ENCODE measurements at regions of chr2 and their contacts with region 1.

Region 1: DNA sequence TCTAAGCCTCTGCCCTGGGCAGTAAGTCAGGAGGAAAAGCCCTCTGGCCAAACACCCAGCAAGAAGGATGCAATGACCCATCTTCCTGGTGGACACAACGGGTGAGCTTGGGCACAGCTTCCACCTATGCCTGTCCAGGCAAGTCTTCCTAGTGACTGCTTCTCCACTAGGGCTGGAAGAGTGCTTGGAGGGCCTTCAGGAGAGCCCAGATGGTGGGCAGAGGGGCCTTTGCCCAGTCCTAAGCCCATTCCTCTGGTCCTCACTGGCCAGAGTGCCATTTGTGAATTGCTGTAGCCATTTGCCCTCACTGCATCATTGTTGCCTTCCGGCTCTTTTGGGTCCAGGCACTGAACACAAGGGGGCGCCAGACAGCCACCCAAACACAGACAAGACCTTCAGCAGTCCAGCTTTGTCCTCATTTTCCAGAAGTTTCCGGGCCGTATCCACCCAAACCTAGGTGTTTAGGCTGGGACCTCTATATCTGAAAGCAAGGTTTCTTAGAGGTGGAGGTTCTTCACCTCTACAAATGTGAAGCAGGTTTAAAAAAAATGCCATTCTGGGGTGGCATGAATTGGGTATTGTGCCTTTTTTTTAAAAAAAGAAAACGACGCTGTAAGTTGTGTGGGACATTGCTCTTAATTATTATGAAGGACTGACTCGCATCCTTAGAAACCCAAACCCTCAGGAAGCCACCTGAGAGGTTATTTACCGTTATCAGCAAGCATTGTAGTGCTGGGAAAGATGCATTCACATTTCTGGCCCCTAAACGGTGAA is 29.5 kb downstream of the PAX8 start:
- DNase-seq: peak; percentile 83
- H3K4me3 ChIP-seq: no peak overlapping the region
- H3K27ac ChIP-seq: no peak overlapping the region
- H3K4me1 ChIP-seq: peaks cover 0 to 8% (median 2%) of the 10 kb centered on the region in 4 donors
- H3K27me3 ChIP-seq: no peaks in the 10 kb centered on the region
- CTCF ChIP-seq: peak; percentile 53 to 91 (median 84)
- EP300 ChIP-seq: no peak
- POLR2A ChIP-seq: no peak

Region 2: GRCh38 chr2:113324684-113325160 is 75.5 kb after region 1 on chr2:
- intact Hi-C with region 1: loop called (anchors 10 kb)
- DNase-seq: no peak
- H3K4me3 ChIP-seq: peak overlapping the region; percentile 10 to 46 (median 40)
- H3K27ac ChIP-seq: peak overlapping the region in 3 of 4 donors; percentile 24 to 78 (median 28)
- H3K4me1 ChIP-seq: peaks cover 0 to 23% (median 15%) of the 10 kb centered on the region in 4 donors
- H3K27me3 ChIP-seq: no peaks in the 10 kb centered on the region
- CTCF ChIP-seq: no peak
- EP300 ChIP-seq: no peak
- POLR2A ChIP-seq: no peak

Region 3: DNA sequence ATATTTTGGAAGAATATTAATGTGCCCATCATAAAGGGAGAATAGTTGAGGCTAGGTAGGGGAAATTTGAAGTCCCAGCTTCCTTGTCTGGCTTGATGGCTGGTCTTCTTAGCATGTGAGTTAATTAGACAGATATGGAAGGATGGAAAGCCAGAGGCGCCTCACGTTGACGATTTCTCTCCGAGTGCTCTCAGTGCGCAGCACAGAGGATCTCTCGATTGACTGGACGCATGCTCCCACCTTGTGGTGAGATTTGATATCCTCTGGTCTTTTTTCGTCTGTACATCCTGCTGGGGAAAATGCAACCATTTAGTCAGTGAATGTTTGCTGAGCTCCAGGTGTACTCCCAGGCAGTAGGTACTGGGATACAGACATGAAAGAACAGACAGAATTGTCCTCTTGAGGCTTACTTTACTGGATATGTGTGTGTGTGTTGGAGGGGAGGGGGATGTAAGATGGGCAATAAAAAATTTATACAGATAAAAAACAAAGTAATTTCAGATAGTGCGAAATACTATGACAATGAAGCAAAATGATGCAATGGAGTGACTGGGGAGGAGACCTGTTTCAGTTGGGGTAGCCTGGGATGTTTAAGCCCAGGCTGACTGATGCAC is 121.4 kb after region 1 on chr2:
- intact Hi-C with region 1: loop called (anchors 1 kb)
- DNase-seq: peak; percentile 81
- H3K4me3 ChIP-seq: no peak overlapping the region
- H3K27ac ChIP-seq: no peak overlapping the region
- H3K4me1 ChIP-seq: peaks cover 0 to 5% (median 0%) of the 10 kb centered on the region in 4 donors
- H3K27me3 ChIP-seq: no peaks in the 10 kb centered on the region
- CTCF ChIP-seq: peak; percentile 60 to 82 (median 75)
- EP300 ChIP-seq: no peak
- POLR2A ChIP-seq: no peak